A549 (cell line): ENCODE measurements at regions of chr7 and their contacts with region 1.

Region 1: GRCh38 chr7:38382684-38383083 is 109.2 kb upstream of the TARP start:
- DNase-seq: no peak
- ATAC-seq: no peak
- H3K4me3 ChIP-seq: no peak overlapping the region
- H3K27ac ChIP-seq: no peak overlapping the region
- H3K4me1 ChIP-seq: no peaks in the 10 kb centered on the region
- CTCF ChIP-seq: no peak
- EP300 ChIP-seq: no peak
- POLR2A ChIP-seq: no peak
- RAD21 ChIP-seq: no peak

Region 2: GRCh38 chr7:37311355-37311754 is 1071.3 kb before region 1 on chr7:
- CTCF ChIA-PET with region 1: no interaction called
- POLR2A ChIA-PET with region 1: no interaction called
- DNase-seq: peak in 1 of 2 experiments; percentile 18
- ATAC-seq: peak; percentile 54; a peak in 4 of 6 replicates
- H3K4me3 ChIP-seq: no peak overlapping the region
- H3K27ac ChIP-seq: no peak overlapping the region
- H3K4me1 ChIP-seq: peaks cover 19% of the 10 kb centered on the region
- CTCF ChIP-seq: no peak
- EP300 ChIP-seq: no peak
- POLR2A ChIP-seq: no peak
- RAD21 ChIP-seq: no peak

Region 3: GRCh38 chr7:38369816-38370493 is 12.7 kb before region 1 on chr7:
- CTCF ChIA-PET with region 1: interaction called, 65 read pairs
- POLR2A ChIA-PET with region 1: no interaction called
- DNase-seq: peak; percentile 81 to 90
- ATAC-seq: peak; percentile 96 to 98
- H3K4me3 ChIP-seq: no peak overlapping the region
- H3K27ac ChIP-seq: no peak overlapping the region
- H3K4me1 ChIP-seq: no peaks in the 10 kb centered on the region
- CTCF ChIP-seq: peak; percentile 76
- EP300 ChIP-seq: no peak
- POLR2A ChIP-seq: no peak
- RAD21 ChIP-seq: peak; percentile 8 to 27; a peak in 2 of 5 replicates

Region 4: DNA sequence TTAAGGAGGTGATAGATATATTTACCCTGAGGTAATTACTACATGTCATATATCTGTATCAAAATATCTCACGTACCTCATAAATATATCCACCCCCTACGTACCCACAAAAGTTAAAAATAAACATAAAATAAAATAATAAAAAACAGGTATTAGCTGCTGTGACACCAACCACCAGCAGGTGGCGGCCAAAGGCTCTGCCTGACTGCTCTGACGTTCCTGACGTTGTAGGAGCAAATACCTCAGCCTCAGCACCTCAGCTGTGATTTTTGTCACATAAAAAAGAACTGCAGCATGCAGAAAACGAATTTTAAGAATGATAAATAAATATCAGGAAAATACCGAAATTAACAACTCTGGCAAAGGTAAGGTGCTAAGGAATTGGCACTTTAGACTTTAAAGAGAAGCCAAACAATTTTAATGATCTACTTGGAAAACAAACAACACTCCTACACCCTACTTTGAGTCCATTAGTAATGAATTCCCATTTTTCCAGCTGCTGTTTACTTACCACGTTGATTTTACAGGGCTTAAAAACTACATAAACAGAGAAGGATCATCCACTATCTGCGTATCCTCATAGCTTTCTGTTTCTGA is 16.1 kb after region 1 on chr7:
- CTCF ChIA-PET with region 1: interaction called, 14 read pairs
- POLR2A ChIA-PET with region 1: no interaction called
- DNase-seq: peak; percentile 25 to 53
- ATAC-seq: peak; percentile 76 to 86
- H3K4me3 ChIP-seq: no peak overlapping the region
- H3K27ac ChIP-seq: no peak overlapping the region
- H3K4me1 ChIP-seq: no peaks in the 10 kb centered on the region
- CTCF ChIP-seq: peak; percentile 90
- EP300 ChIP-seq: no peak
- POLR2A ChIP-seq: no peak
- RAD21 ChIP-seq: peak; percentile 74 to 76

Region 5: DNA sequence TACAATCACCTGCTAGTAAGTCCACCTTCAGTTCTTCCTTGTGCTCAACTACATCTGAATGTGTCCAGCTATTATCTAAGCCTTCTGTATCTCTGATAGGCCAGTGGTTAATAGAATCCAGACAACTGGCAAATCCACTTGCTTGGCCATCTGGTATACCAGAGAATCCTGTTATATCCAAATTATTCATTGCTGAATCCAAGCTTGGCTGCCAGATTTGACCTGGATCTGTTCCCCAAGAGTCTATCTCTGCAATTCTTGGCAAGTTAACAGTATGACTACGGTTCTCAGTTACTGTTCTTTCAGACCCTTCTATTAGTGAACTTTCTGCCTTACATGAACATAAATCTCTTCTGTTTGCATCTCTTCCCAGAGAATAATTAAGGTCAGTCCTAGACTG is 45.4 kb after region 1 on chr7:
- CTCF ChIA-PET with region 1: no interaction called
- POLR2A ChIA-PET with region 1: no interaction called
- DNase-seq: no peak
- ATAC-seq: no peak
- H3K4me3 ChIP-seq: no peak overlapping the region
- H3K27ac ChIP-seq: no peak overlapping the region
- H3K4me1 ChIP-seq: no peaks in the 10 kb centered on the region
- CTCF ChIP-seq: no peak
- EP300 ChIP-seq: no peak
- POLR2A ChIP-seq: no peak
- RAD21 ChIP-seq: no peak